Sigmoid colon (tissue), 7 donors: ENCODE measurements at regions of chr3 and their contacts with region 1.

Region 1: DNA sequence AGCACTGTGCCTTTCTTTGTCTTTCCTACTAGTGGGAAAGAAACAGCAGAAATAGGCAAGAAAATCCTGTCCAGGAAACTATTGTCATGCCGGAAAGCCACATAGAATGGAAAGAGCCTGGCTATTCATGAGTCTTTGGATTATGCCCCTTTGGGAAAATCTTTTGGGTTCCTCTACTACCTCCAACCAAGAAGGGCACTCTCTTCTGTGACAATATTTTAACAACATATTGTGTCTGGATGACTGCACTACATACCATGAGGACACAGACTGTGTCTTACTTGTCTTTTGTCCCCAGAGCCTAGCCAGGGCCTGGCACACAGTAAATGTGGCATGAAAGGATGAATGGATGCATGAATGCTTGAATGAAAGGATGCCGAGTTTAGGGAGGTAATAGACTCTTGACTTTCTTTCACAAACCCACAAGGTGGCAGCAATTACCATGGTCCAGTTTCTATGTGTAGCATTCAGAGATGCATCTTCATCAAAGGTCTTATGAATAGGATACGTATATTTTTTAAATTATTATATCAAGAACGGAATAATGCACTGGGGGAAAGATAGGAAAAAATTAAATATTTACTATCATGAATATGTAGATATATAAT is 30.3 kb downstream of the ARL14 start:
- DNase-seq: no peak
- H3K4me3 ChIP-seq: no peak overlapping the region
- H3K27ac ChIP-seq: no peak overlapping the region
- H3K4me1 ChIP-seq: no peaks in the 10 kb centered on the region
- H3K27me3 ChIP-seq: no peaks in the 10 kb centered on the region
- CTCF ChIP-seq: peak; percentile 41 to 70 (median 56)
- EP300 ChIP-seq: no peak
- POLR2A ChIP-seq: no peak

Region 2: GRCh38 chr3:160653512-160653911 is 53.8 kb before region 1 on chr3:
- intact Hi-C with region 1: no loop called
- DNase-seq: no peak
- H3K4me3 ChIP-seq: no peak overlapping the region
- H3K27ac ChIP-seq: no peak overlapping the region
- H3K4me1 ChIP-seq: no peaks in the 10 kb centered on the region
- H3K27me3 ChIP-seq: no peaks in the 10 kb centered on the region
- CTCF ChIP-seq: no peak
- EP300 ChIP-seq: no peak
- POLR2A ChIP-seq: no peak

Region 3: DNA sequence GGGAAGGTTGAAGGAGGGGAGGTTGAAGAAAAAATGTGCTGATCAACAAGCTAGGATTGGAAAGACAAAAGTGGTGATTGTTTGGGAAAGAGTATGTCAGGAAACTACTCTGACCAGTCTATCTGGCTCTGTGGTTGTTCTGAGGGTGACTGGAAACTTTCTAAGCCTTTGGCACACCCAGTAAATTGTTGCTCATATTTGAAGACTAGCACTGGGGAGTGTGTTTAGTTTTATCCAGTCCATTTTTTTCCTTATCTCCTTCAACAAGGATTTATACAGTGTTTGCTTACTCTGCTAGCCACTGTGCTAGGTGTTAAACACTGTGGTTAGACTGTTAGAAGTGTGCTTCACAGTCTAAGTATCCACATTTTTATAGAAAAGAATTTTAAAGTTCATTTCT is 77.6 kb after region 1 on chr3:
- intact Hi-C with region 1: no loop called
- DNase-seq: no peak
- H3K4me3 ChIP-seq: no peak overlapping the region
- H3K27ac ChIP-seq: peak overlapping the region in 3 of 4 donors; percentile 52 to 62 (median 59)
- H3K4me1 ChIP-seq: peaks cover 0 to 55% (median 35%) of the 10 kb centered on the region in 4 donors
- H3K27me3 ChIP-seq: no peaks in the 10 kb centered on the region
- CTCF ChIP-seq: no peak
- EP300 ChIP-seq: no peak
- POLR2A ChIP-seq: no peak

Region 4: GRCh38 chr3:160941885-160942494 is 234.7 kb after region 1 on chr3:
- intact Hi-C with region 1: loop called (anchors 1 kb)
- DNase-seq: peak; percentile 81
- H3K4me3 ChIP-seq: no peak overlapping the region
- H3K27ac ChIP-seq: no peak overlapping the region
- H3K4me1 ChIP-seq: no peaks in the 10 kb centered on the region
- H3K27me3 ChIP-seq: no peaks in the 10 kb centered on the region
- CTCF ChIP-seq: peak; percentile 87 to 91 (median 90)
- EP300 ChIP-seq: no peak
- POLR2A ChIP-seq: no peak

Region 5: DNA sequence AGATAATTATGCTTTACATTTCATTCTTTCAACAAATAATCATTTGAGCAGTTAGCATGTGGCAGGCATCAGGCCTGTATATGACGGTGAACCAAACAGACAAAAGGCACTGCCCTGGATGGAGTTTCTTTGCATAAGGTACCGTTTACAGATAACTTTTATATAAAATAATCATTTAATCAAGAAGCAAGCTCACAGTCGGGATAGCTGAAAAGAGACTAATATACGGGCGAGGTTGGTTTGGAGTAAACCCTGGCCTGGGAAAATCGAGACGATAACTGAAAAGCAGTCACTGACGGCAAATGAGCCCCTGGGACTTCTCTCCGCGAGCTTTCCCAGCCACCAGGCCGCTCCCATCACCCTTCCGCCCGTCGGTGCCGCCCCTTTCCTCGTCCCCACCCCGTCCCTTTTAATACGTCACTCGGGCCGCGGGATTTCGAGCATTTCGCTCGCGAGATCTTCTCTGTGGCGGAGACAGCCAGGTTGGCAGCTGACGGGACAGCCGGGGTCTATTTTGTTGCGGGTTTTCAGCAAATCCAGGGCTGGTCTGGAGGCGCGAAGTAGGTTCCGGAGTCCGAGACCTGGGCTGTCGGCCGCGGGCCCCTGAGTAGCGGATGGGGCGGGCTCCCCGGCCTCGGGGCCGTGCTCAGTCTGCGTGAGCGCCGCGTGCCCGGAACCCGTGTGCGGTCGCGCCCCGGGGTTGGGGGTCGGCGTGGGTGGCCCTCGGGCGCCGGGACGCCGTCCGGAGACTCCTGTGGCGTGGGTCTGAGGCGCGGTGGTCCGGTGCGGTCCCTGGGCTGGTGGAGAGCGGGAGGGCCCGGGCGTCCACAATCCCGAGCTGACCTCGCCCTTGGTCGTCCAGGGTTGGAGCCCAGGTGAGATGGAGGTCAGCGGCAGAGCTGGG is 513.8 kb after region 1 on chr3 and contains the start of gene NMD3:
- intact Hi-C with region 1: loop called (anchors 10 kb)
- DNase-seq: peak; percentile 97
- H3K4me3 ChIP-seq: peak within 1 kb of the TSS; percentile 83 to 97 (median 94)
- H3K27ac ChIP-seq: peak within 1 kb of the TSS; percentile 90 to 97 (median 92)
- H3K4me1 ChIP-seq: peaks cover 0 to 35% (median 19%) of the 10 kb centered on the region in 4 donors
- H3K27me3 ChIP-seq: no peaks in the 10 kb centered on the region
- CTCF ChIP-seq: no peak
- EP300 ChIP-seq: peak in 1 of 4 donors; percentile 7
- POLR2A ChIP-seq: peak; percentile 65 to 67
- total RNA-seq, gene NMD3: 42.4 to 58.3 (median 49.7) TPM

Region 6: GRCh38 chr3:161423911-161424522 is 716.7 kb after region 1 on chr3:
- intact Hi-C with region 1: loop called (anchors 5 kb)
- DNase-seq: no peak
- H3K4me3 ChIP-seq: no peak overlapping the region
- H3K27ac ChIP-seq: no peak overlapping the region
- H3K4me1 ChIP-seq: no peaks in the 10 kb centered on the region
- H3K27me3 ChIP-seq: no peaks in the 10 kb centered on the region
- CTCF ChIP-seq: peak; percentile 28 to 76 (median 55)
- EP300 ChIP-seq: no peak
- POLR2A ChIP-seq: no peak